ENCODE measurements at regions of chr18 and their contacts with region 1.

Region 1: DNA sequence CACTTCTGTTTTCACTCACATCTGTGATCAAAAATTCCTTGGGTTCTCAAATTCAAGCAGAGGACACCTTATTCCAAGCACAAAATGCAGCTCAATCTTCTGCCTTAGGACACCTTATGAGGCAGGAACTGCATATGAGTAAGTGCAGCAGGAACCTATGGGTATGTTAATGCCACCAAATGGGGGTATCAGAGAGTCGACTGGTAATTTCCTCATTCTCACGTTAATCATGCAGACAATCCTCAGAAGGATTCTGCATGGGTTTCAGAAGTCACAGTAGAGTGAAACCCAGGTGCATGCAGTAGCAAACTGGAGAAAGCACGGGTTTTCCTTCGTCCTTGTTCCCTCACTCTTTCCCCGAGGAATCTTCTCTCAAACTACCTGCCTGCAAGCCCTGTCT is 452.8 kb downstream of the CBLN2 start:
- DNase-seq: no peak
- ATAC-seq: peak; percentile 83
- H3K4me3 Mint-ChIP-seq: peak overlapping the region; percentile 53
- H3K27ac Mint-ChIP-seq: peak overlapping the region; percentile 42
- H3K4me1 Mint-ChIP-seq: peaks cover 30% of the 10 kb centered on the region
- H3K27me3 Mint-ChIP-seq: no peaks in the 10 kb centered on the region
- CTCF ChIP-seq: no peak

Region 2: DNA sequence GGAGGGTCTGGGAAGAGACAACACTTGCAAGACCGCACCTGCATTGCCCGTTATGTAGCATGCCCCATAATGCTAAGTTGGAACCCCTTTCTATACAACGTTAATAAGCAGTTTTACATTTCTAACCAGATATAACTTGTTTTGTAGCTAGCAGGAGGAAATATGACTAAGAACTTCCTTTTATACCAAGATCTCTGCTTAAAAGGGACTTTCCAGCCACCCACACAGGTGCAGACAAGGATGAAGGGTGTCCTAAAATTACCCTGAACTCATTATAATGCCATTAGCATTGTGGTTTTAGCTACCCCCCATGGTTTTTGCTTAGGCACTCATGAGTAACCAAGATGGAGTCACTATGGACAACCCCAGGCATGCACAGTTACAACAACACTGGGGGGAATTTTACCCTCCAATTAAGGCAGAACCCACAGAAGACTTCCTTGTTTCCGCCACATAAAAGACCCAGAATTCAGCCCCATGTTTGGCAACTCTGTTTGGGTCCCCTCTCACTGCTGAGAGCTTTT is 89.9 kb after region 1 on chr18:
- CTCF ChIA-PET with region 1: no interaction called
- POLR2A ChIA-PET with region 1: no interaction called
- intact Hi-C with region 1: loop called (anchors 1 kb)
- DNase-seq: no peak
- ATAC-seq: peak; percentile 90
- H3K4me3 Mint-ChIP-seq: peak overlapping the region; percentile 17
- H3K27ac Mint-ChIP-seq: peak overlapping the region; percentile 85
- H3K4me1 Mint-ChIP-seq: peaks cover 13% of the 10 kb centered on the region
- H3K27me3 Mint-ChIP-seq: no peaks in the 10 kb centered on the region
- CTCF ChIP-seq: no peak

Region 3: GRCh38 chr18:72283148-72283925 is 192.0 kb after region 1 on chr18:
- CTCF ChIA-PET with region 1: no interaction called
- POLR2A ChIA-PET with region 1: no interaction called
- intact Hi-C with region 1: loop called (anchors 10 kb)
- DNase-seq: no peak
- ATAC-seq: no peak
- H3K4me3 Mint-ChIP-seq: no peak overlapping the region
- H3K27ac Mint-ChIP-seq: no peak overlapping the region
- H3K4me1 Mint-ChIP-seq: peaks cover 7% of the 10 kb centered on the region
- H3K27me3 Mint-ChIP-seq: no peaks in the 10 kb centered on the region
- CTCF ChIP-seq: no peak

Region 4: DNA sequence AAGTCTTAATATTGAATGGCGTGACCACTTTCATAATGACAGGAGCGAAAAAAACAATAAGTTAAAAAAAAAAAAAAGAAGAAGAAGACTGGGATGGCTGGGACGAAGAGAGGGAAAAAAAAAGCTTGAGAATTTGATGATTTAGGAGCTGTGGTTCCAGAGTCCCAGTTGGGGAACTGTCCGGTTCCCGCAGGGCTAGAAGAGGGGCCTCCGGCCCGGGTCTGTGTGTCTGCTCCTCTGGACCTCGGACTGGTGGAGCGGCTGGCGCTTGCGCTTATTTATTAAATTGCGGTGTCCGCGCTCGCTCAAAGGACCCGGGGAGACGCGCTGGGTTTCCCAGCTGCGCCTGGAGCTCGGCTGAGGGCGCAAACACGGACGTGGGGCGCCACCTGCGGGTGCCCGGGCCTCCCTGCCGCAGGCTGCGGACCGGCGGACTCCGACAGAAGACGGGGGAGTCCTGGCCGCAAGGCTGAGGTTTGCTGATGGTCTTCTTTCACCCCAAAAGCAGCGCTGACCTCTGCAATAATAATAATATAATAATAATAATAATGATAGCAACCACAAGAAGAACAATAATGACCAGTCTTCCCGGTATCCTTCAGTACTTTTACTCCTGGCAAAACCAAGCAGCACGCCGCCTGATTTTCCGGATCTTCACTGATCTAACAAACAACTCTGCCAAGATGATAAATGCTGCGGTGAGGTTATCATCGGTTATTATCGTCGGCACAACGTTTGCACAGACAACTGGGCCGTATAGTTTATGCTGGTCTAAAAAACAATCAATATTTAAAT is 452.9 kb after region 1 on chr18 and contains the start of gene CBLN2:
- CTCF ChIA-PET with region 1: no interaction called
- POLR2A ChIA-PET with region 1: no interaction called
- intact Hi-C with region 1: loop called (anchors 5 kb)
- DNase-seq: peak; percentile 36
- ATAC-seq: peak; percentile 56
- H3K4me3 Mint-ChIP-seq: peak within 1 kb of the TSS; percentile 55
- H3K27ac Mint-ChIP-seq: no peak within 1 kb of the TSS
- H3K4me1 Mint-ChIP-seq: peaks cover 12% of the 10 kb centered on the region
- H3K27me3 Mint-ChIP-seq: peaks cover 35% of the 10 kb centered on the region
- CTCF ChIP-seq: no peak
- total RNA-seq, gene CBLN2: 0.09 TPM in 1 of 2 replicates, not detected in the other